HCT116 (cell line): ENCODE measurements at regions of chr5 and their contacts with region 1.

Region 1: DNA sequence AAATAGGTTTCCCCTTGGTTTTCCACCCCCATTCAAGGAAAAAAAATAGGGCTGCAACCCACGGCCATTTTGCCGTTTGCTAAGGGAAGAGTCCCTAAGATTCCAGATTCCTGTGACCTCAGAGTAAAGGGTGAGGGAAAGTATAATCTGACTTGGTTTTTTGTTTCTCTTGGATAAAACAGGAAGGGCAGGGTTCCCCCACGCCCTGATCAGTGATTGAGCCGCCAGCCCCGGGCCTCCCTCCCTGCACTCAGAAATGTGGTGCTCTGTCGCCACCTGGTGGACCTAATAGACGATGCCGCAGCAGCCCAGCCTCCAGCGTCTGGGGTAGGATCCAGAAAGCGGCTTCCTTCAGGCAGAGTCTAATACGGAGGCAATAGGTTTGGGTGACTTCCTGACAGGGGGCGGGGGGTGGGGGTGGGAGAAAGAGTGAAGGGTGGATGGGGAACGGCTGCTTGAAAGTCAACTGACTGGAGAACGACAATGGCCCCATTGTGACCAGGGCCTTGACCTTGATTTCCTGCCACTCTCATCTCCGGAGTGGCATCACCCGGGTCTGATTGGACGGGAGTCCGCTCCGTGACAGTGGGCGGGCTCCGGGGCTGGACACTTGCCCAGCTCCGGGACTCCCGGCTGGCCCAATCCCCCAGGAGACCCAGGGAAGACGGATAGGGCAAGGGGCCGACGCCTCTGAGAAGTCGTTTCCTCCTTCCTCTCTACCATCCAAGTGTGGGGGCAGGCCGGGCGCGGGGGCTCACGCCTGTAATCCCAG is 17.8 kb upstream of the CYSTM1 start:
- DNase-seq: peak; percentile 70
- ATAC-seq: peak; percentile 96
- H3K4me3 ChIP-seq: peak overlapping the region; percentile 15 to 41
- H3K27ac ChIP-seq: no peak overlapping the region; the same call in 1 of the 2 replicates
- H3K4me1 ChIP-seq: peaks cover 6 to 18% of the 10 kb centered on the region in 2 experiments; a peak in 3 of 4 replicates
- H3K27me3 ChIP-seq: no peaks in the 10 kb centered on the region
- CTCF ChIP-seq: peak; percentile 87 to 95 (median 90)
- POLR2A ChIP-seq: no peak
- RAD21 ChIP-seq: peak; percentile 98

Region 2: DNA sequence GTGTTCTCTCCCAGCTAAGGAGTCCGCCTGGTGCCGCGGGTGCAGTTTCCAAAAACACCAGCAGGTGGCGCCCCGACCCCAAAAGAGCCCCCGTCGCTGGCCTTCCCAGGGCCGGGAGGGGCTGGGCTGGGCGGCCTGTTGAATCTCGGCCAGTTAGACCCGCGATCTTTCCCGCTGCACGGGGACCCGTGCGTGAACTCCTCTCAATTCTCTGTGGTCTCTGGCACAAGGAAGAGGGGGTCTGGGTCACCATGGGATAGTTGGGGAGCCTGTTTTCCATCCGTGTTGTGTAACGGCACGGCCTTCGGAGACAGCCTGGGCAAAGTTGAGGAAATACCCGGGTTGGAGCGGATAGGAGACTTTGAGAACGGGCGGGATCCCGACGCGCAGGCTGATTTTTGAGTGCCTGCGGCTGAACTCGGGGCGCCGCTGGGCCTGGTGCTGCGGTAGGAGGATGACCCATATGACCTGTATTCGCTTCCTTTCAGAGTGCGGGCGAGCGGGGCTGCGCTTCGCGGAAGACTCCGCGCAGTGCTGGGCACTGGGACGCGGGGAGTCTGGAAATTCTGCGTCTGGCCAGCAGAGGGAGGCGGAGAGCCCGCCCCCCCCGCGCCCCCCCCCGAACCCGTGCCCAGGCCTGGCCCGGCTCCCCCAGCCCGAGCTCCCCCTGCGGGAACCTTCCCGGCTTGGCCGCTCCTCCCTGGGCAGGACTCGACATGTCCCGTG is 369.5 kb before region 1 on chr5:
- CTCF ChIA-PET with region 1: interaction called, 9 read pairs
- POLR2A ChIA-PET with region 1: no interaction called
- RAD21 ChIA-PET with region 1: interaction called in 1 of 2 experiments, 3 read pairs
- intact Hi-C with region 1: loop called (anchors 1 kb)
- DNase-seq: peak; percentile 54
- ATAC-seq: peak; percentile 90
- H3K4me3 ChIP-seq: peak overlapping the region; percentile 58 to 63
- H3K27ac ChIP-seq: peak overlapping the region; percentile 47; the same call in 1 of the 2 replicates
- H3K4me1 ChIP-seq: peaks cover 3 to 10% of the 10 kb centered on the region in 2 experiments; a peak in 2 of 4 replicates
- H3K27me3 ChIP-seq: no peaks in the 10 kb centered on the region
- CTCF ChIP-seq: peak; percentile 86 to 99 (median 95)
- POLR2A ChIP-seq: no peak
- RAD21 ChIP-seq: peak; percentile 99

Region 3: DNA sequence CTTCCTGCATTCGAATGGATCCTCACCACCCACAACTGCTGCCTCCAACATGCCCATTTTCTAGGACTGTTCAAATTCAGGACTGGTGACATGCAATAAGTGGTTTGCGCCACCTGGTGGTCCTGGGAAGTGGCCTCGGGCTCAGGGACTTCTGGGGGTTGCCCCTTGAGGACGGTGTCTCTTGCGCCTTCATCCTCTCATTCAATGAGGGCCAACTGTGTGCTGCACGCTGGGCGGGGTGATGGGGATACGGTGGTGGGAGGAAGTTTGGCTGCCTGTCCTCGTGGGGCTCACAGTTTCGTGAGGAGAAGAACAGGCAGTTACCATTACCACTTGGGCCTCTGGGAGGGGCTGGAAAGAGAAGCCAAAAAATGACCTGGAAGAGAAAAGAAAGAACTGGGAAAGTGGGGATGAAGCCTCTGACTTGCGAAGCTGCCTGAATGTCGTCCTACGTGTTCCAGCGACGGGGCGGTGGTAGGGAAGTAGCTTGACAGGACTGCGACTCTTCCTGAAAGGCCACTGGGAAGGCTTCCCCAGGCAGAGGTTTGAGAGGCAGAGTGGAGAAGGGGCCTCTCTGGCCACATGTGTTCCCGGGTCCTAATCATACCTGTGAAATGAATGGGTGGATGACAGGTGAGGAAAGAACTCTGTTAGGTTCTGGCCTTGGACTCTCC is 312.6 kb before region 1 on chr5:
- CTCF ChIA-PET with region 1: no interaction called
- POLR2A ChIA-PET with region 1: no interaction called
- RAD21 ChIA-PET with region 1: no interaction called
- intact Hi-C with region 1: loop called (anchors 10 kb)
- DNase-seq: peak; percentile 79
- ATAC-seq: peak; percentile 74
- H3K4me3 ChIP-seq: no peak overlapping the region
- H3K27ac ChIP-seq: no peak overlapping the region
- H3K4me1 ChIP-seq: peaks cover 0 to 13% of the 10 kb centered on the region in 2 experiments; a peak in 2 of 4 replicates
- H3K27me3 ChIP-seq: no peaks in the 10 kb centered on the region
- CTCF ChIP-seq: peak; percentile 92 to 96 (median 95)
- POLR2A ChIP-seq: no peak
- RAD21 ChIP-seq: peak; percentile 88

Region 4: DNA sequence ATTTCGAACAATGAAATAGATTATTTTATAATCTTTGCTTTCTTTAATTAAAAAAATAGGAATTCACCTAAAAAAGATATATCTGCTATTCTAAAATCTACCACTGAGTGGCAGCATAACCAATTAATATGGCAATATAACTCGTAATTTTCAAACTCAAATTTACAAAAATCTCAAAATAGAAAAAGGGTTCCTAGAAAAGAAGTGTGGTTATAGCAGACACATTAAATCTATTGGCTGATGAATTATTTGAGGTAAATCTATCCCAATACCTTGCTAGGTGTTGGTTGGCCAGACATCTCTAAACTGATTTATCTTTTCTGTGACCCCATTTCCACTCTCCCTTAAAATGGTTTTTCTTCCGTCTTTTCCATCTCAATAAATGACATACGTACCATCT is 83.9 kb before region 1 on chr5:
- CTCF ChIA-PET with region 1: interaction called, 23 read pairs
- POLR2A ChIA-PET with region 1: no interaction called
- RAD21 ChIA-PET with region 1: interaction called in 1 of 2 experiments, 4 read pairs
- intact Hi-C with region 1: loop called (anchors 1 kb)
- DNase-seq: no peak
- ATAC-seq: no peak
- H3K4me3 ChIP-seq: no peak overlapping the region
- H3K27ac ChIP-seq: no peak overlapping the region
- H3K4me1 ChIP-seq: 0 out of 4 replicates have a peak, but pooled peaks cover 0 to 4% of the 10 kb centered on the region in 2 experiments
- H3K27me3 ChIP-seq: no peaks in the 10 kb centered on the region
- CTCF ChIP-seq: peak; percentile 36 to 79 (median 68)
- POLR2A ChIP-seq: no peak
- RAD21 ChIP-seq: peak; percentile 78

Region 5: GRCh38 chr5:140169410-140169809 is 12.2 kb after region 1 on chr5:
- CTCF ChIA-PET with region 1: interaction called, 12 read pairs
- POLR2A ChIA-PET with region 1: interaction called, 3 read pairs
- RAD21 ChIA-PET with region 1: interaction called in 1 of 2 experiments, 4 read pairs
- intact Hi-C with region 1: no loop called
- DNase-seq: no peak
- ATAC-seq: peak; percentile 83
- H3K4me3 ChIP-seq: no peak overlapping the region
- H3K27ac ChIP-seq: no peak overlapping the region
- H3K4me1 ChIP-seq: peaks cover 3 to 16% of the 10 kb centered on the region in 2 experiments; a peak in 3 of 4 replicates
- H3K27me3 ChIP-seq: no peaks in the 10 kb centered on the region
- CTCF ChIP-seq: peak; percentile 21 to 65 (median 34); a peak in 3 of 6 replicates
- POLR2A ChIP-seq: no peak
- RAD21 ChIP-seq: peak; percentile 78

Region 6: DNA sequence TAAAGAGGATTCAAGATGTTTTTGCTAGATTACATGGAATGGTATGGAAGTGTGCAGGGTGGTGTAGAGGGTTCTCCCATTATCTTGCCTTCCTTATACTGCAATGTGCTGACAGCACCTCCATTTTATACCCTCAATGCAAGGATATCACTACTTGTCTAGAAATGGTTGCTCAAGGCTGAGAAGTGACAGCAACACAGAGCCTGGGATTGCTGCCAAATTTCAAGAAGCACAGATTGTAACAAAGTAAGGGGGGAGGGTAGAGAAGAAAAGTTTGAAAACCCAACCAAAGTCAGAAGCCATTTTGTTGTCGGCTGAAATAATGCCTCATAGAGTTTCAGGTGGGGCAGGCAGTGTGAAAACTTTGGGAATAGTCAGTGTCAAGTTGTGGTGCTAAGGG is 838.8 kb after region 1 on chr5:
- CTCF ChIA-PET with region 1: no interaction called
- POLR2A ChIA-PET with region 1: no interaction called
- RAD21 ChIA-PET with region 1: no interaction called
- intact Hi-C with region 1: no loop called
- DNase-seq: no peak
- ATAC-seq: no peak
- H3K4me3 ChIP-seq: no peak overlapping the region
- H3K27ac ChIP-seq: no peak overlapping the region
- H3K4me1 ChIP-seq: peaks cover 5 to 8% of the 10 kb centered on the region in 2 experiments; a peak in 3 of 4 replicates
- H3K27me3 ChIP-seq: no peaks in the 10 kb centered on the region
- CTCF ChIP-seq: no peak
- POLR2A ChIP-seq: no peak
- RAD21 ChIP-seq: no peak